ENCODE measurements at regions of chr6 and their contacts with region 1.

Region 1: DNA sequence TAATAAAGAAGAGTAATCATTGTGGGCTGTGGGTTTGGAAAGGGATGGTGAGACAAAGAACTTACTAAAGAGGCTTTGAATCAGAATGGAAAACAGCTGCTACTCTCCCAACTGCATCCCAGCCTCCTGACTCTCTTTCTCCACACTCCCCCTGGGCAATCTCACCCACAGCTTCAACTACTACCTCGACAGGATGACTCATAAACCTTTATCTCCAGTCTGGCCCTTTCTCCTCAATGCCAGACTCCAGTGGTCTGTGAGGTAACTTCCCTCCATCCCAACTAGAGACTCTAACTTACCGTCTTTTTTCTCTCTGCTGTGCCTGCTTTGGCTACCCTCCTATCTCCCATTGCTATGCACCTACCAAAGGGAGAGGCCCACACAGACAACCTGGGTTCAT is 135.3 kb upstream of the RREB1 start:
- DNase-seq: peak; percentile 42
- H3K27ac ChIP-seq: no peak overlapping the region
- CTCF ChIP-seq: no peak

Region 2: GRCh38 chr6:7108964-7109836 is 136.7 kb after region 1 on chr6:
- CTCF ChIA-PET with region 1: no interaction called
- POLR2A ChIA-PET with region 1: interaction called, 13 read pairs
- DNase-seq: peak; percentile 76
- H3K27ac ChIP-seq: peak overlapping the region; percentile 90
- CTCF ChIP-seq: no peak